Astrocyte of the cerebellum (primary cell): ENCODE measurements at regions of chr12 and their contacts with region 1.

Region 1: DNA sequence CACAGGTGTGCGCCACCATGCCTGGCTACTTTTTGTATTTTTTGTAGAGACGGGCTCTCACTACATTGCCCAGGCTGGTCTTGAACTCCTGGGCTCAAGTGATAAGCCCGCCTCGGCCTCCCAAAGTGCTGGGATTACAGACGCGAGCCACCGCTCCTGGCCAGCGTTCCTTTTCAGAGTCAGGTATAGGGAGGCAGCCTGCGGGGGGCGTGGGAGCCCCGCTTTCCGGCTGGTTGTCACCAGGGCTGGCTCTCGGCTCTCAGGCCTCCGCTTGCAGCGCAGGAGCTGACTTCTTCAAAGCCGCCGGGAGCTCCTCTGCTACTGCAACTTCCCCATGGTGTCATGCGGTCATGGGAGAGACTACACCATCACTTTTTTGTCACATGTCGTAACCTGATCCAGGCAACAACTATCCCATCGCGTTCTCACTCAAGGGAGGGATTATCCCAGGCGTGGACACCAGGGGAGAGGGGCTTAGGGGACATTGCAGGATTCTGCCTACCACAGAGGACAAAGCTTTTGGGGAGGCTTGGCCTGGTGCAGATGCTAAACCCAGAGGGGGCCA is 129.4 kb downstream of the SCARB1 start:
- DNase-seq: no peak
- H3K4me3 ChIP-seq: no peak overlapping the region
- CTCF ChIP-seq: peak; percentile 19

Region 2: DNA sequence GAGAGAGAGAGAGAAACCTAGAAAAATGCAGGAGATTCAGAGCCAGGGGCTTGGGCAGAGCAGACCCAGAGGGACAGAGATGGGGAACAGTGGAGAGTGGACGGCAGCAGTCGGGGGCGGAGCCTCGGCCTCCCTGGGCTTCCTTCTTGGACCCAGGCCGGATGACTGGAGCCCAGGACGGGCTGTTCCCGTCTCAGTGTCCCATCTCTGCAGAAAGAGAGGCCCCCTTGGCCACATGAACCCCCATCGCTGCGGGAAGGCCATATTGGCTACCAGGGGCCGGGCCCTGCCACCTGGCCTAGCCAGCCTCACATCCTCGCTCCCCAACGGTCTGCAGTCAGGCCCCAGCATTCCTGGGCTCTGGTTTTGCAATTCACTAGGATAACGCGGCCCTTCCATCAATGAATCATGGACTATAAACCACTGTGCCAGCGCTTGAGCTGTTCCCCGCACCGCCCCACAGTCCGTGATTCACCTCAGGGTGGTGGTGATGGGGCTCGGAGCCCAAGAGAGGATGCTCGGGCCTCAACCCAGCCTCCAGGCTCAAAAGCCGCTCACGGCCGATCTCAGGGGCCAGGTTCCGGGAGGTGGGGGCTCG is 322.9 kb before region 1 on chr12:
- in situ Hi-C with region 1: loop called (anchors 5 kb)
- DNase-seq: peak; percentile 72
- H3K4me3 ChIP-seq: no peak overlapping the region
- CTCF ChIP-seq: no peak

Region 3: GRCh38 chr12:124578445-124578844 is 155.9 kb before region 1 on chr12:
- in situ Hi-C with region 1: loop called (anchors 5 kb)
- DNase-seq: no peak
- H3K4me3 ChIP-seq: no peak overlapping the region
- CTCF ChIP-seq: no peak

Region 4: GRCh38 chr12:124680863-124681778 is 53.2 kb before region 1 on chr12:
- in situ Hi-C with region 1: loop called (anchors 5 kb)
- DNase-seq: peak; percentile 68
- H3K4me3 ChIP-seq: no peak overlapping the region
- CTCF ChIP-seq: peak; percentile 37